ENCODE measurements at regions of chr17 and their contacts with region 1.

Region 1: GRCh38 chr17:7136266-7136877 is 21.8 kb upstream of the ASGR2 start:
- DNase-seq: peak; percentile 76 to 83 (median 81)
- H3K4me3 ChIP-seq: peak overlapping the region in 2 of 3 experiments; percentile 73 to 82
- H3K4me3 Mint-ChIP-seq: peak overlapping the region; percentile 82 to 94
- H3K27ac ChIP-seq: peak overlapping the region; percentile 100
- H3K27ac Mint-ChIP-seq: peak overlapping the region; percentile 96 to 100 (median 97)
- H3K4me1 ChIP-seq: peaks cover 85 to 91% of the 10 kb centered on the region in 2 donors
- H3K4me1 Mint-ChIP-seq: peaks cover 83% of the 10 kb centered on the region
- H3K27me3 ChIP-seq: no peaks in the 10 kb centered on the region
- H3K27me3 Mint-ChIP-seq: peaks cover 0 to 6% (median 1%) of the 10 kb centered on the region in 3 donors
- CTCF ChIP-seq: peak; percentile 99

Region 2: DNA sequence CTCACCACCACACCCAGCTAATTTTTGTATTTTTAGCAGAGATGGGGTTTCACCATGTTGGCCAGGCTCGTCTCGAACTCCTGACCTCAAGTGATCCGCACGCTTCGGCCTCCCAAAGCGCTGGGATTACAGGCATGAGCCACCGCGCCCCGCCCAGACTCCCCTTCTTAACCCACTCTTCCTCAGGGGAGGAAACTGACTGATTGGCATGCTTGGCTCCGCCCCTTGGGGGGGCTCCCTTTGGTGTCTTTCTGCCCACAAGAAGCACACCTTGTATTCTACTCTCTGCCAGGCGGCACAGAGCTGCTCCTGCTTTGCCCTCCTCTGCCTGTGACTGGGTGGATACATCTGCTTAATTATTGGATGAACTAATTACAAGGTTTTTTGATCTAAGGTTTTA is 17.1 kb before region 1 on chr17:
- intact Hi-C with region 1: loop called (anchors 2 kb)
- DNase-seq: no peak
- H3K4me3 ChIP-seq: no peak overlapping the region
- H3K4me3 Mint-ChIP-seq: no peak overlapping the region
- H3K27ac ChIP-seq: peak overlapping the region; percentile 78 to 99
- H3K27ac Mint-ChIP-seq: peak overlapping the region; percentile 98 to 100 (median 99)
- H3K4me1 ChIP-seq: peaks cover 93 to 99% of the 10 kb centered on the region in 2 donors
- H3K4me1 Mint-ChIP-seq: peaks cover 65% of the 10 kb centered on the region
- H3K27me3 ChIP-seq: no peaks in the 10 kb centered on the region
- H3K27me3 Mint-ChIP-seq: no peaks in the 10 kb centered on the region
- CTCF ChIP-seq: no peak

Region 3: GRCh38 chr17:7147772-7148171 is 11.4 kb after region 1 on chr17:
- intact Hi-C with region 1: no loop called
- DNase-seq: no peak
- H3K4me3 ChIP-seq: no peak overlapping the region
- H3K4me3 Mint-ChIP-seq: no peak overlapping the region
- H3K27ac ChIP-seq: no peak overlapping the region
- H3K27ac Mint-ChIP-seq: peak overlapping the region in 1 of 7 donors; percentile 18
- H3K4me1 ChIP-seq: peaks cover 10 to 17% of the 10 kb centered on the region in 2 donors
- H3K4me1 Mint-ChIP-seq: peaks cover 28% of the 10 kb centered on the region
- H3K27me3 ChIP-seq: no peaks in the 10 kb centered on the region
- H3K27me3 Mint-ChIP-seq: peaks cover 0 to 11% (median 1%) of the 10 kb centered on the region in 3 donors
- CTCF ChIP-seq: no peak

Region 4: DNA sequence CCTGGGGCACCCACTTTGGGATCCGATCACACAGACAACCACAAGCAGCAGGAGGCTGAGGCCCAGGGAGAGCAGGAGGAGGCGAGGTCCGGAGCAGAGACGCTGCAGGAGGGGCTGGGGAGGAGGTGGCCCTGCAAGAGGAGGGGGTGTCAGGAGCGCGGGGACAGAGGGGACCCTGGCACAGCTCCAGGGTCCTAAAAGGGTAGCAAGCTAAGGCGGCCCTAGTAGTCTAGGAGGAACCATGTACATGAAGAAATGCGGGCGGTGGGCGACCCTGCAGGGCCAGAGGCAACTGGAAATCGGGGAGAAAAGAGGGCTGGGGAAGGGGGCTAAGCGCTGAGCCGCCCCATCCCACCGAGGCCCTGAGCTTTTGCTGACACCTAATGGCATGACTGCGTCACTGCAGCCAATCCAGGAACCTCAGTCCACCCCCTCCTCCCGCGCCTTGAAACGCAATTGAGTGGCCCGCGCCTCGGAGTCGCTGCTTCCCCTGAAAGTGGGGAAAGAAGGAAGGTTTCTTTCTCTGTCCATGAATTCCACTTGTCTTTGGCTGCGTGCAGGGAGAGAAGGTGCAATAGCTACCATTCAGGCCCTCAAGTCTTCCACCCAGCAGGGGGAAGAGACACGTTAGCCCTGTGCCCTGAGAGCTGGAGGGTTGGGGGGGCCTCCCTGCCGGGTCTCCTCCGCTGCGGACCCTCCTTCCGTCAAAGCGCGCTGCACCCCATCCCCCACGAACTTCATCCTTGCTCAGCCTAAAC is 41.0 kb after region 1 on chr17:
- intact Hi-C with region 1: loop called (anchors 2 to 5 kb)
- DNase-seq: peak; percentile 67 to 79 (median 78)
- H3K4me3 ChIP-seq: peak overlapping the region in 1 of 3 experiments; percentile 72
- H3K4me3 Mint-ChIP-seq: peak overlapping the region in 1 of 2 donors; percentile 86
- H3K27ac ChIP-seq: no peak overlapping the region
- H3K27ac Mint-ChIP-seq: peak overlapping the region in 5 of 7 donors; percentile 6 to 64 (median 30)
- H3K4me1 ChIP-seq: peaks cover 32 to 38% of the 10 kb centered on the region in 2 donors
- H3K4me1 Mint-ChIP-seq: peaks cover 15% of the 10 kb centered on the region
- H3K27me3 ChIP-seq: peaks cover 5 to 11% of the 10 kb centered on the region in 2 donors
- H3K27me3 Mint-ChIP-seq: peaks cover 16 to 19% (median 19%) of the 10 kb centered on the region in 3 donors
- CTCF ChIP-seq: peak; percentile 98